Endothelial cell of umbilical vein (primary cell): ENCODE measurements at regions of chr10 and their contacts with region 1.

Region 1: DNA sequence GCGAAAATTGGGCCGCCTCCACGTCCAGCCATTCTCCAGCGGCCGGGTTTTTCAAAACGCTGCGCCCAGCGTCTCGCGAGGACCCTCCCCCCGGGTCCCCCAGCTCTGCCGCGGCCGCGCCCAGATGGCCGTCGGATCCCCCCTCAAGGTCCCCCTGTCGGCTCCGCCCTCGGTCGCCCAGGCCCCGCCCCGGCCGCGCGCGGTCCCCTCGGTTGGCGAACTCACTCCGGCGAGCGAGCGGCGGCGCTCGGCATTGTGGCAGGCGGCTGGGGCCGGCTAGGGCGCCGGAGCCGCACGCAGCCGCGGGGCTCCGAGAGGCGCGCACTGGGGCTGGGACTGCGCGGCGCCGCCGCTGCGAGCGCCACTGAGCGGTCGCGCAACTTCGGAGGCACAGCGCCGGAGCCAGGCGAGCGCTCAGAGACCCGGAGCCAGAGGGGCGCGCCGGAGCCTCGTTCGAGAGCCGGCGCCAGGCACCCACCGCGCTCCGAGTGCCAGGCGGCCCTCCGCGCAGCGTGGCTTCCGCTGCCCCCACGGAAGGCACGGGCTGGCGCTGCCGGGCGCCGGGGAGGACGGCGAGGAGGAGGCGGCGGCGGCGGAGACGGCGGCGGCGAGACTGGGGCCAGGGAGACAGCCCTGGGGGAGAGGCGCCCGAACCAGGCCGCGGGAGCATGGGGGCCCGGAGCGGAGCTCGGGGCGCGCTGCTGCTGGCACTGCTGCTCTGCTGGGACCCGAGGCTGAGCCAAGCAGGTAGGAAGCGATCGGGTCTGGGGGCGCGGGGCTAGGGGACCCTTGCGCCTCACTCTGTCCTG is at the start of gene UNC5B:
- DNase-seq: peak; percentile 80
- H3K4me3 ChIP-seq: peak within 1 kb of the TSS; percentile 11 to 36 (median 33)
- H3K27ac ChIP-seq: no peak within 1 kb of the TSS
- H3K4me1 ChIP-seq: peaks cover 21% of the 10 kb centered on the region
- H3K27me3 ChIP-seq: peaks cover 46 to 63% of the 10 kb centered on the region in 2 experiments
- CTCF ChIP-seq: peak in 1 of 2 donors; percentile 19
- POLR2A ChIP-seq: no peak
- total RNA-seq, gene UNC5B: 2.5 and 5.4 TPM in 2 replicates

Region 2: DNA sequence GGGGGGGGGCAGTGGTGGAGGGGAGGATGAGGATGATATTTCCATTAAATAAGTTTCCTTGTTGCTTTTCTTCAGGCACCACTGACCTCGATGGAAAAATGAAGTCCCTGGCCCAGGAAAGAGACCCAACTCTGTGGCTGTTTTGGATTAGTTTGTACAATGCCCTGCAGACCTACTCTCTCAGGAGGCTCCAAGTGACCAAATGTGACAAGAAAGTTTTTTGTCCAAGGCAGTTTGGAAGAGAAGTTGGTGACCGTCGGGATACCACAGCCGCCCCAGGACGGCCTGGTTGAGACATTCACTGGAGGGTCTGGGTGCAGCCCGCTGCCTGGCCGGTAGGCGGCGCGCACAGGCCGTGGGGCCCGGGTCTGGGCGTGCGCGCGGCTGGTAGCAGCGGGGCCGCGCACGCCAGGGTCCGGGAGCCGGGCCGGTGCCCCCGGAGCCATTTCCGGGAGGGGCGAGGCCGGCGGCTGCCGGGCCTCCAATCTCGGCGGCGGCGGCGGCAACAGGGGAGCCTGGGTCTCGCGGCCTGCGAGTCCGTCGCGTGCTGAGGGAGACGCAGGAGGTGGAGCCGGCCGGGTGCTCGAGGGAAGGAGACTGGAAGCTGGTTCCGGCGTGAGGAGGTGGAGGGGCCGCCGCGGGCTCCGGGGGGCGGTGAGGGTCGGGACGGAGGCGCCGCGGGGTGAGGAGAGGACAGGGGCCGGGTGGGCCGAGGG is 396.9 kb before region 1 on chr10 and contains the start of gene SGPL1:
- CTCF ChIA-PET with region 1: no interaction called
- POLR2A ChIA-PET with region 1: no interaction called
- dilution Hi-C with region 1: no loop called
- intact Hi-C with region 1: loop called (anchors 5 kb)
- DNase-seq: peak; percentile 79
- H3K4me3 ChIP-seq: peak within 1 kb of the TSS; percentile 58 to 75 (median 59)
- H3K27ac ChIP-seq: peak within 1 kb of the TSS; percentile 23
- H3K4me1 ChIP-seq: peaks cover 3% of the 10 kb centered on the region
- H3K27me3 ChIP-seq: peaks cover 0 to 3% of the 10 kb centered on the region in 2 experiments
- CTCF ChIP-seq: peak; percentile 91 to 99
- POLR2A ChIP-seq: no peak
- total RNA-seq, gene SGPL1: 25.2 and 28.0 TPM in 2 replicates

Region 3: GRCh38 chr10:70925377-70926225 is 286.9 kb before region 1 on chr10:
- CTCF ChIA-PET with region 1: interaction called, 37 read pairs
- POLR2A ChIA-PET with region 1: no interaction called
- dilution Hi-C with region 1: no loop called
- intact Hi-C with region 1: loop called (anchors 1 kb)
- DNase-seq: peak; percentile 30
- H3K4me3 ChIP-seq: no peak overlapping the region
- H3K27ac ChIP-seq: no peak overlapping the region
- H3K4me1 ChIP-seq: no peaks in the 10 kb centered on the region
- H3K27me3 ChIP-seq: peaks cover 5 to 9% of the 10 kb centered on the region in 2 experiments
- CTCF ChIP-seq: peak; percentile 91 to 94
- POLR2A ChIP-seq: no peak

Region 4: GRCh38 chr10:71234970-71235685 is 22.6 kb after region 1 on chr10:
- CTCF ChIA-PET with region 1: interaction called, 5 read pairs
- POLR2A ChIA-PET with region 1: no interaction called
- dilution Hi-C with region 1: no loop called
- intact Hi-C with region 1: loop called (anchors 2 kb)
- DNase-seq: no peak
- H3K4me3 ChIP-seq: no peak overlapping the region
- H3K27ac ChIP-seq: no peak overlapping the region
- H3K4me1 ChIP-seq: peaks cover 5% of the 10 kb centered on the region
- H3K27me3 ChIP-seq: peaks cover 3 to 21% of the 10 kb centered on the region in 2 experiments
- CTCF ChIP-seq: no peak
- POLR2A ChIP-seq: no peak

Region 5: DNA sequence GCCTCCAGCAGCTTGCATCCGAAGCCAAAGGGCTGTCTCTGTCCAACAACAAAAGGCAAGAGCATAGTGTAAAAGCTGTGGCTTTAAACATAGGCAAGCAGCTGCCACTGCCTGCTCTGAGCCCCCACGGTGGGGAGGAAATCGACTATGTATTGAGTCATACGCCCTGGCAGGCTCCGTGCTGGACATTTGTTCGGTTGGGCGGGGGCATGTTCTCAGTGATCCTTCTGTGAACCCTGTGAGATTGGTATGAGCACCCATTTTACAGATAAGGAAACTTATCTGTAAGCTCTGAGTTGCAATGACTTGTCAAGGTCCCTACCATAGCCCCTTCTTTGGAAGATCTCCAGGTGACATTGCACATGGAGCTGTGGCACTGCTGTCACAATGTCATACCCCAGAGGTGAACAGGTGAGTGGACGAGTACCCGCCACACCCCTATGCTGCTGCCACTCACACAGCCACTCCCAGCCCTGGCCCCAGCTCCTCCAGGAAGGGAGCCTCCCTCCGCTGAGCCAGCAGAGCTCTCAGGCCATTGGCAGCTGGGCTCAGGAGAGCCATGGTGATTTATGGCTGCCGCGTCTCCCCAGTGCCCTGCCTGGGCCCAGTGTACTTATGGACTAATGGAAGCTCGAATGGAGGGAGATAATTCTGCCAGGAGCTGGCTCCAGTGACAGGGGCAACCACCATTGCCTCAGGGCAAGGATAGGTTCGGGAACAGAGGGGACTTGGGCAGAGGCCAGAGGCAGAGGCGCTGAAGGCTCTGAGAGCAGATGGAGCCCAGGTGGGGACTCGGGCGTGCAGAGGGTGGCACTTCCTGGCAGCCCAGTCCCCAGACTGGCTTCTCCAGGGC is 43.5 kb after region 1 on chr10:
- CTCF ChIA-PET with region 1: interaction called, 10 read pairs
- POLR2A ChIA-PET with region 1: no interaction called
- dilution Hi-C with region 1: no loop called
- intact Hi-C with region 1: loop called (anchors 5 kb)
- DNase-seq: peak; percentile 84
- H3K4me3 ChIP-seq: no peak overlapping the region
- H3K27ac ChIP-seq: peak overlapping the region; percentile 10
- H3K4me1 ChIP-seq: peaks cover 24% of the 10 kb centered on the region
- H3K27me3 ChIP-seq: no peaks in the 10 kb centered on the region
- CTCF ChIP-seq: no peak
- POLR2A ChIP-seq: no peak